Heart left ventricle (tissue), 16 donors: ENCODE measurements at regions of chr7 and their contacts with region 1.

Region 1: DNA sequence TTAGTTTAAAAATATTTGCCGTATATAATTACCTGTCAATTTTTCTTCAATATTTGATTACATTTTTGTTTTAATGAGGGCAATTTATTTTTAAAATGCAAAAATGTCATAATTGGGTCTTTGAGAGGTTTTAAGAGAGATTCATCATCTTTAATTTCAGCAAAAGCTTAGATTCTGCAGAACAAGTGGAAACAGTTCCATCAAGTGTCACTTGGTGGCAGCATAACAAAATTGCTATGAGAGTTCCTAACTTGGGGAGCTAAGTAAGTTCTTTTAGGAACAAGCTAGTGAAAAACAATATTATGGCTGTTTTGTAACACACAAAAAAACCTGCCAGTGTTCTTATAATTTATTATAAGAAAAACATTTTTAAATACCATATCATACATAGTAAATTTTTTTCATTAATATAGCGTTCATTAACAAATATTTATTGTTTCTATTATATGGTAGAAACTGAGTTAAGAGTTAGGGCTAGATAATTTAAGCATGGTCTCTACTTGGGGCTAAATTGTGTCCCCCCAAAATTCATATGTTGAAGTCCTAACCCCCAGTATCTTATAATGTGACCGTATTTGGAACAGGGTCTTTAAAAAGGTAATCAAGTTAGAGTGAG is 155.2 kb downstream of the MAGI2 start:
- DNase-seq: no peak
- ATAC-seq: no peak
- H3K4me3 ChIP-seq: no peak overlapping the region
- H3K27ac ChIP-seq: no peak overlapping the region
- H3K4me1 ChIP-seq: no peaks in the 10 kb centered on the region
- H3K27me3 ChIP-seq: no peaks in the 10 kb centered on the region
- CTCF ChIP-seq: peak; percentile 56 to 83 (median 69)
- POLR2A ChIP-seq: no peak

Region 2: DNA sequence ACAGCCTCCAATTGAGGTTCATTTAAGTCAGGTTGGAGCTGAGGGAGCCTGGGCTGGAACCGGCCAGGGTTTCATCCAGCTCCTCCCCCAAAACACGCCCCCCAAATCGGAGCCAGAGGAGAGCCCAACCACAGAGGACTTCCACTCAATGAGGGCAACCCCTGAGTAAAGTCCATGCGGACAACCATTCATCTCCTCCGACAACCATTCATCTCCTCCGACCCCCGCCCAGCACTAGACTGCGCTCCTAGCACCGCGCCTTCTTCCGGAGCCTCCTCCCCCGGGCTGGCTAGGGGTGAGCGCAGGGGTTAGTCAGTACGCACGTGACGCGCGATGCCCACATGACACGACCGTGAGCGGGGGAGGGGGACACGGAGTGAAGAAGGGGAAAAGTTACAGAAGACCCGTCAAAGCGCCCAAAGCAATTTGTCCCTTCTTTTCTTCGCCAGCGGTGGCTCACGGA is 153.8 kb after region 1 on chr7:
- intact Hi-C with region 1: loop called in 4 of 10 experiments (anchors 5 to 10 kb)
- DNase-seq: peak; percentile 84 to 92 (median 87)
- ATAC-seq: peak; percentile 84 to 90 (median 87)
- H3K4me3 ChIP-seq: peak overlapping the region; percentile 64 to 93 (median 74)
- H3K27ac ChIP-seq: peak overlapping the region; percentile 47 to 98 (median 91)
- H3K4me1 ChIP-seq: peaks cover 0 to 32% (median 20%) of the 10 kb centered on the region in 12 donors
- H3K27me3 ChIP-seq: peaks cover 0 to 14% (median 0%) of the 10 kb centered on the region in 9 donors
- CTCF ChIP-seq: no peak
- POLR2A ChIP-seq: peak in 1 of 2 donors; percentile 38

Region 3: DNA sequence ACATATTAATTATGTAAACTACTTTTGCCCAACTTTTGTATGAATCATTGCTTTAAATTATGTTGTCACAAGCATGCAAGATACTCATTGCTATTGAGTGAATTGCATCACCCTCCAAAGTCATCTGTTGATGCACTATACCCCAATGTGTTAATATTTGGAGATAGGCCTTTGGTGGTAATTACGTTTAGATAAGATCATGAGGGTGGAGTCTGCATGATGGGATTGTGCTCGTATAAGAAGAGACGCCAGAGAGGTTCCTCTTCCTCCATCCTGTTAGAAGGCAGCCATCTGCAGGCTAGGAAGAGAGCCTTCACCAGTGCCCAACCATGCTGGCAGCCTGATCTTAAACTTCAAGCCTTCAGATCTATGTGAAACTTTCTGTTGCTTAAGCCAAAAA is 250.5 kb after region 1 on chr7:
- intact Hi-C with region 1: loop called in 1 of 10 experiments (anchors 10 kb)
- DNase-seq: no peak
- ATAC-seq: no peak
- H3K4me3 ChIP-seq: no peak overlapping the region
- H3K27ac ChIP-seq: no peak overlapping the region
- H3K4me1 ChIP-seq: no peaks in the 10 kb centered on the region
- H3K27me3 ChIP-seq: no peaks in the 10 kb centered on the region
- CTCF ChIP-seq: no peak
- POLR2A ChIP-seq: no peak

Region 4: GRCh38 chr7:79734158-79734557 is 435.9 kb after region 1 on chr7:
- intact Hi-C with region 1: loop called in 1 of 10 experiments (anchors 10 kb)
- DNase-seq: no peak
- ATAC-seq: no peak
- H3K4me3 ChIP-seq: no peak overlapping the region
- H3K27ac ChIP-seq: no peak overlapping the region
- H3K4me1 ChIP-seq: no peaks in the 10 kb centered on the region
- H3K27me3 ChIP-seq: no peaks in the 10 kb centered on the region
- CTCF ChIP-seq: no peak
- POLR2A ChIP-seq: no peak

Region 5: GRCh38 chr7:79741684-79742083 is 443.4 kb after region 1 on chr7:
- intact Hi-C with region 1: loop called in 5 of 10 experiments (anchors 5 to 10 kb)
- DNase-seq: no peak
- ATAC-seq: no peak
- H3K4me3 ChIP-seq: no peak overlapping the region
- H3K27ac ChIP-seq: no peak overlapping the region
- H3K4me1 ChIP-seq: no peaks in the 10 kb centered on the region
- H3K27me3 ChIP-seq: no peaks in the 10 kb centered on the region
- CTCF ChIP-seq: peak in 7 of 12 donors; percentile 11 to 40 (median 26)
- POLR2A ChIP-seq: no peak

Region 6: DNA sequence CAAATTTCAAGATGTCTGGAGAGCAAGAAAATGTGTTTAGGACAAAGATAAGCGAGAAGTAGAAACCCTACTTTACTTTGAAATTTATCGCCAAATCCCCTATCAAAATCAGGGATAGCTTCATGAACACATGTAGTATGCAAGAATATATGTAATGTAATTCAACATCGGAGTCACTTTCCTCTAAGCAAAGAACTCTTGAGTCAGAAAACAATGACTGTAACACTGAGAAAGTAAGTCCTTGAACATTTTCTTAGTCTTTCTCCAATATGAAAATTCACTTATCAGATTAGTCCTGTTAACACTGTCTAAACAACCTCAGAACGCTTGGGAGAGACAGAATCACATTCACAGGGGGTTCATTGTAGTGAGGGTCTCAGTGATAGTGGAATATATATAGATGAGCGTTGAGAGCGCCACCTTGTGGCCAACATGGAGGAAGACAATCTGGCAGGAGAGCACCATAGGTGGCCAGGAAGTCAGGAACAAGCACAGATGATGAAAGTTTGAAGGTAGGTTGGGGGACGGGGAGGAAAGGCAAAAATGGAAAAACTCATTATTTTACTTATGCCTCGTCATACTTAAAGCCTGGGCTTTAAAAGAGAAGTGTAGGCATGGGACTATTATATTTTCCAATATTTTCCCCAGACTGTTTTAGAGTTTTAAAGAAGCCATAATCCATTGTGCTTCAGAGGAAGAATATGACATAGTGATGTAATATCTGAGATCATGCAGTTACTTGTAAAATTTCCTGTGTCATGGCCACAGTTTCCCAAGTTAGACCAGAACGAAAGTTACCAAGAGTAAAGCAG is 720.9 kb after region 1 on chr7:
- intact Hi-C with region 1: loop called in 5 of 10 experiments (anchors 2 to 10 kb)
- DNase-seq: peak in 4 of 5 donors; percentile 9 to 25 (median 22)
- ATAC-seq: peak in 3 of 4 donors; percentile 45 to 59 (median 57)
- H3K4me3 ChIP-seq: no peak overlapping the region
- H3K27ac ChIP-seq: no peak overlapping the region
- H3K4me1 ChIP-seq: no peaks in the 10 kb centered on the region
- H3K27me3 ChIP-seq: no peaks in the 10 kb centered on the region
- CTCF ChIP-seq: peak; percentile 67 to 86 (median 79)
- POLR2A ChIP-seq: no peak